Tibial artery (tissue), 4 donors: ENCODE measurements at regions of chr1 and their contacts with region 1.

Region 1: DNA sequence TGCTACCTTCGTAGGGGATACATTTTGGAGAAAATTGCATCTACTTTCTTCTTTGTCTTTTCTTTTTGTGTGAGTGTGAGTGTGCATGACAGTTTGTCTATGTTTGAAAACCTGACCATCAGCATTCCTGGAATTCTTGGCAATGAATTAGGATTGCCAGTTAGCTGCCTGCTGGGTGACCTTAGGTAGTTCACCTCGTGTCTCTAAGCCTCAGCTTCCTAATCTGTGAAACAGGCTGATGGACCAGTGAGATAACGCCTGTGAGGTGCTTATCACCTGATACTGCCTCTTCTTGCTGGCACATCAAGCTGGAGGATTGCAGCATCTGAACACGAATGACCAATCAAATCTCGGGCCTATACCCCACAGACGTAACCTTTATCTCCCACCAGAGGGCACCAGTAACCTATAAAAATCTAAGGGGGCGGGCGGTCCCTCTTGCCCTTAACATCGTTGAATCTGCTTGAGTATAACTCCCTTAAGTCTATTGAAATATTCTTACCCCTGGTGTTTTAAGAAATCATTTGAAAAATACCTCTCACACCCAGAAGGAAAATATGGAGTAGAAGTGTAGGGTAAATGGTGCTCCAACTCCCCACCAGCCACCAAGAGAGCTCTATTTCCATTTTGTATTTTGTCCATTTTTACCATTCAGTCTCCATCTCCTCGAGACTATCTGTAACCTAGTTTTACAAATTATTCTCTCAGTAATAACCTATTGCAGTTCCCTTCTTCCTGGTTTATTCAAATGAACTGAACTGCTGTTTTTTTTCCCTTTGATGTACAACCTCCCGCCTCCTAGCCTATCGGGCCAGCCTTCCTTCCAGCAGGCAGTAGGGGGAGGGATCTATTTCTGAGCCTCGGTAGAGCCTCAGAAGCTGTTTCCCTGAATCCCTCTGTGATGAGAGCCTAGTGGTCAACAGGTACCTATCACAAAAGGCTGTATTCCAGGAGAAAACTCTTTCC is 49.7 kb downstream of the MDM4 start:
- DNase-seq: peak in 1 of 2 donors; percentile 26
- H3K4me3 ChIP-seq: no peak overlapping the region
- H3K27ac ChIP-seq: no peak overlapping the region
- H3K4me1 ChIP-seq: peaks cover 0 to 8% (median 0%) of the 10 kb centered on the region in 4 donors
- H3K27me3 ChIP-seq: no peaks in the 10 kb centered on the region
- CTCF ChIP-seq: peak in 1 of 2 experiments; percentile 40

Region 2: GRCh38 chr1:204806943-204807687 is 241.2 kb after region 1 on chr1:
- intact Hi-C with region 1: loop called (anchors 5 kb)
- DNase-seq: peak; percentile 72 to 75
- H3K4me3 ChIP-seq: peak overlapping the region; percentile 31 to 39
- H3K27ac ChIP-seq: no peak overlapping the region
- H3K4me1 ChIP-seq: peaks cover 0 to 5% (median 0%) of the 10 kb centered on the region in 4 donors
- H3K27me3 ChIP-seq: peaks cover 0 to 5% of the 10 kb centered on the region in 2 donors
- CTCF ChIP-seq: peak; percentile 83 to 85